ENCODE measurements at regions of chr10 and their contacts with region 1.

Region 1: DNA sequence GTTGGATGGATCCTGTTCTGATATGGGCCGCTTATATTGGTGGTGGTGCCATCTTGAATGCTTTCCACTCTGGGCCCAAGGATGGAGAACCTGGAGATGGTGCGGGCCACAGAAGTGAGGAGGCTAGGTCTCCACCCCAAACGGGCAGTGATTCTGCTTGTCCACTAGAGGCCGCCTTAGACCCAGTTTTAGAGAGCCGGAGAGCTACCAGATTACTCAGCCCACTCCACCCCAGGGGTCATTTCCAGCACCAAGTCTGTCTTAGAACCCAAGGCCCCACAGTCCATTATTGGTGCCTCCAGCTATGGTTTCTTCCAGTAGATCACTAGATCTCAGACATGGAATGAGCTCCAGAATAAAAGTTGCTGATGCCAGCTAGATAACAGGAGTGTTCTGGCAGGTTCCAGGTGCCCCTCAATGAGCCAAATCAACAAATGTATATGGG is 11.8 kb upstream of the CAMK2G start:
- DNase-seq: peak; percentile 52
- ATAC-seq: peak; percentile 97
- H3K4me3 Mint-ChIP-seq: no peak overlapping the region
- H3K27ac Mint-ChIP-seq: no peak overlapping the region
- H3K4me1 Mint-ChIP-seq: peaks cover 11% of the 10 kb centered on the region
- H3K27me3 Mint-ChIP-seq: no peaks in the 10 kb centered on the region
- CTCF ChIP-seq: no peak

Region 2: GRCh38 chr10:73931767-73932619 is 45.9 kb after region 1 on chr10:
- CTCF ChIA-PET with region 1: interaction called, 181 read pairs
- POLR2A ChIA-PET with region 1: no interaction called
- intact Hi-C with region 1: no loop called
- DNase-seq: no peak
- ATAC-seq: peak; percentile 66
- H3K4me3 Mint-ChIP-seq: no peak overlapping the region
- H3K27ac Mint-ChIP-seq: peak overlapping the region; percentile 20
- H3K4me1 Mint-ChIP-seq: peaks cover 15% of the 10 kb centered on the region
- H3K27me3 Mint-ChIP-seq: no peaks in the 10 kb centered on the region
- CTCF ChIP-seq: no peak

Region 3: GRCh38 chr10:74081192-74081803 is 195.2 kb after region 1 on chr10:
- CTCF ChIA-PET with region 1: interaction called, 140 read pairs
- POLR2A ChIA-PET with region 1: interaction called, 4 read pairs
- intact Hi-C with region 1: loop called (anchors 1 kb)
- DNase-seq: no peak
- ATAC-seq: peak; percentile 51
- H3K4me3 Mint-ChIP-seq: no peak overlapping the region
- H3K27ac Mint-ChIP-seq: no peak overlapping the region
- H3K4me1 Mint-ChIP-seq: peaks cover 44% of the 10 kb centered on the region
- H3K27me3 Mint-ChIP-seq: no peaks in the 10 kb centered on the region
- CTCF ChIP-seq: no peak

Region 4: DNA sequence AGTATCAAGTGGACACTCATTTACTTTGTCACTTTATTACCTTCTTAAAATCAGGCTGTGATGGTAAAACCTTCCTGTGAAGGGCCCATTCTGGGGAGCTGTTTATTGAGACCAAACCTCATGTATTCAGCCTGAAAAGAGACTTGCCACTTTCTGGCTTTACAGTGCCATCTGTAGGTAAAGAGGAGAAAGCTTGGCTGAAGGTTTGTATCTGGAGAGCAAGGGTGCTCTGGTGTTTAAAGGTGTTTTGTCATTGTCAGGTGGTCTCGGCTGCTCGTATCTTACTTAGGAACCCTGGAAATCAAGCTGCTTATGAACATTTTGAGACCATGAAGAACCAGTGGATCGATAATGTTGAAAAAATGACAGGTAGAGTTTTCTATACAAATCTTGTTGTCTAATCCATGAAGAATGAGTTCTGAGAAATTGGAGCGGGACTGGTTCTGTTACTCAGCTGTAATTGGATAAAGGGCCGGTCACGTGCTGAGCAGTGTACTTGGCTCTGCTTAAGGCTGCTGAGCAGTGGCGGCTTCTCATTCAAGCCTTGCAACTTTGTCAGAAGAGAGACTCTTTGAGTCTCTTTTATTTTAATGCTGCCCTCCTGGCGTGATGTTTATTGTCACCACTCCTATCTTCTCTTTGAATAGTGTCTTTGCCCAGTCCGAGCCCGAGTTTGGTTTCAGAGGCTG is 217.6 kb after region 1 on chr10:
- CTCF ChIA-PET with region 1: interaction called, 32 read pairs
- POLR2A ChIA-PET with region 1: no interaction called
- intact Hi-C with region 1: loop called (anchors 1 kb)
- DNase-seq: no peak
- ATAC-seq: peak; percentile 45
- H3K4me3 Mint-ChIP-seq: no peak overlapping the region
- H3K27ac Mint-ChIP-seq: no peak overlapping the region
- H3K4me1 Mint-ChIP-seq: peaks cover 2% of the 10 kb centered on the region
- H3K27me3 Mint-ChIP-seq: no peaks in the 10 kb centered on the region
- CTCF ChIP-seq: no peak

Region 5: GRCh38 chr10:75099952-75100763 is 1214.1 kb after region 1 on chr10:
- CTCF ChIA-PET with region 1: no interaction called
- POLR2A ChIA-PET with region 1: no interaction called
- intact Hi-C with region 1: loop called (anchors 5 kb)
- DNase-seq: peak; percentile 79
- ATAC-seq: peak; percentile 99
- H3K4me3 Mint-ChIP-seq: no peak overlapping the region
- H3K27ac Mint-ChIP-seq: no peak overlapping the region
- H3K4me1 Mint-ChIP-seq: peaks cover 1% of the 10 kb centered on the region
- H3K27me3 Mint-ChIP-seq: no peaks in the 10 kb centered on the region
- CTCF ChIP-seq: peak; percentile 92